Naive thymus-derived CD4-positive, alpha-beta T cell (primary cell): ENCODE measurements at regions of chrX and their contacts with region 1.

Region 1: DNA sequence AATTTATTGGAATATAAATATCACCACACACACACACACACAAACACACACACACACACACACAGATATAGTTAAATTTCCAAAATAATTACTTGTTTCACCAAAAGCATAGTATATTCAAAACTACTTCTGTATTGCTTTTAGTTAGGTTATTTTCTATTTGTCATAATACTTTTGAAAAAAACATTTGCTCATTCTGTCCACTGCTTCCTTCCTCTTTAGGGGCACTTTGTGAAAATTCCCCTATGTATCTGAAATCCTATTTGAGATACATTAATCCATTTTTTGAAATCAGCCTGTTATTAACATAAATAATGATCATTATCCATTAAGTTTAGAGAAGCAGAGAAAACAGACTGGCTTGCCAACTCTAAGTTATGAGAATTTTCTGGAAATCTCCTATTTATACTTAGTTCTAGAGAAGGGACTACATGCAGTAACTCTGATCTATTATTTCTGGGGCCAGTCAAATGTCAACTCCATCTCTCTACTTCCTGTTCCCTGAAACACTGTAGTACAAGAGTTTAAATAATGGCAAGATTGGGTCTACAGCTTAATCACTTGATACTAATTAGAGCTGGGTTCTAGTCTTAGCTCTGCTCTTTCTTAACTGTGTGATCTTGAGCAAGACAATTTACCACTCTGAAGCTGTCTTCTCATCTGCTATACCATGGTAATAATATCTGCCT is 54.4 kb upstream of the GPR174 start:
- DNase-seq: no peak
- ATAC-seq: no peak
- H3K4me3 ChIP-seq: no peak overlapping the region
- H3K4me3 Mint-ChIP-seq: peak overlapping the region in 3 of 10 donors; percentile 11 to 42 (median 28)
- H3K27ac ChIP-seq: no peak overlapping the region
- H3K27ac Mint-ChIP-seq: peak overlapping the region in 8 of 9 donors; percentile 19 to 85 (median 66)
- H3K4me1 ChIP-seq: peaks cover 1 to 8% of the 10 kb centered on the region in 2 donors
- H3K4me1 Mint-ChIP-seq: peaks cover 0 to 71% (median 39%) of the 10 kb centered on the region in 7 donors
- H3K27me3 ChIP-seq: no peaks in the 10 kb centered on the region
- H3K27me3 Mint-ChIP-seq: no peaks in the 10 kb centered on the region

Region 2: GRCh38 chrX:79325263-79325958 is 235.4 kb after region 1 on chrX:
- CTCF ChIA-PET with region 1: no interaction called
- POLR2A ChIA-PET with region 1: no interaction called
- intact Hi-C with region 1: loop called in 1 of 2 experiments (anchors 5 kb)
- DNase-seq: peak in 8 of 9 donors; percentile 25 to 69 (median 50)
- ATAC-seq: peak; percentile 86
- H3K4me3 ChIP-seq: no peak overlapping the region
- H3K4me3 Mint-ChIP-seq: peak overlapping the region; percentile 52 to 86 (median 82)
- H3K27ac ChIP-seq: peak overlapping the region; percentile 57
- H3K27ac Mint-ChIP-seq: peak overlapping the region; percentile 78 to 97 (median 89)
- H3K4me1 ChIP-seq: no peaks in the 10 kb centered on the region
- H3K4me1 Mint-ChIP-seq: peaks cover 0 to 29% (median 14%) of the 10 kb centered on the region in 7 donors
- H3K27me3 ChIP-seq: no peaks in the 10 kb centered on the region
- H3K27me3 Mint-ChIP-seq: no peaks in the 10 kb centered on the region